Heart left ventricle (tissue), 16 donors: ENCODE measurements at regions of chr2 and their contacts with region 1.

Region 1: DNA sequence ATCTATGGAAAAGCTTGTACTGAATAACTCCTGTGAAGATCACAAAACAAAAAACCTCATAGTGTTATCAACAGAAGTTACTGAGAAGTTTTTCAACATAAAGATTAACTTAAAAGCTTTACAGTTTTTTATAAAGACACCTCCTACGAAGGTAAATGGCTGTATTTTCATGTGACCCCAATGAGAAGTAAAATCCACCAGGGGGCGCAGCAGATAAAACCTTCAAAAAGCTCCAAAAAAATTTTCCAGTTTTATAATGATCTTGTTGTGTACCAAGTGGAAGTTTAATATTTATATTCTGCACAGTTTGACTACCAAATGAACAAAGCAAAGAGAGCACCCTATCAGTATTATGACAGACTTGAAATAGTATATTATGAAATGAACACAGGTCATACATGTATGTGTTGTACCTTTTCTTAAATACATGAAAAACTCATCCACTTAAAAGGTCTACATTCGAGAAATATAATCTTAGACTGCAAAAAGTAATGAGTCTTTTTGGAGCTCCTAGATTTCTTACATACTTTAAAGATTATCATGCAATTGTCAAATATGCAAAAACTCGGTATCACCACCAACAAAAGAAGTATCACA is 38.5 kb downstream of the PNO1 start:
- DNase-seq: no peak
- ATAC-seq: peak in 1 of 4 donors; percentile 47
- H3K4me3 ChIP-seq: no peak overlapping the region
- H3K27ac ChIP-seq: no peak overlapping the region
- H3K4me1 ChIP-seq: peaks cover 0 to 57% (median 19%) of the 10 kb centered on the region in 12 donors
- H3K27me3 ChIP-seq: no peaks in the 10 kb centered on the region
- CTCF ChIP-seq: peak in 11 of 12 donors; percentile 42 to 87 (median 77)
- POLR2A ChIP-seq: no peak

Region 2: DNA sequence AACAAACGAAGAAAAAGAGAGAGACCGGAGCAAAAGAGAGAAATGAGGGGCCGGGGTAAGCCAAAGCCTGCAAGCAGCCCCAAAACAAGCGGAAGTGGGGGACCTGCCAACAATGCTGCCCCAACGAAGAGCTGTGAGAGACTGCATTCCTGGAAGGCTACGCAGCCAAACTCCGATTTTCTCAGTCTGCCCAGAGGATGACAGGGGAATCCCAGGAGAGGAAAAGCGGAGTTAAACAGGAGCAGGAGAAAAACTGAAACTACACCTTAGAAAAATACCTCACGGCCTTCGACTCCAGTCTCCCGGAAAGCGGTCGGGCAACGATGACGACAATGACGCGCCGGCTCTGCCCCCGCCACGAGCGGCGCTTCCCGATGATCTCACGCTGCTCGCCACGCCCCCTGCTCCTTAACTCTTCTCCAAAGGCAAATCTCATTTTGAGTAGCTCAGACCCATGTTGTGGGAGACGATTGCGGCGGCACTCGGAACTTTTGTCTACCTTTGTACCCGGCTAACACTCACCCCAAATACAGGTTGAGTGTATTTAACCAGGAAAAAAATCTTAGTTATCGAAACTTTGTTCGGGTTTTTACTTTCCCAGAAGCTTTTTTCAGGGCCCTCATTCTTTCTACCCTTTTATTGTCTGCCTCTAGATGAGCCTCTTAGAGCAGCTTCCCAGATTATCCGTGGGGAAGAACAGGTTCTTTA is 133.4 kb before region 1 on chr2 and contains the start of gene C1D:
- intact Hi-C with region 1: no loop called
- DNase-seq: peak; percentile 95 to 96 (median 95)
- ATAC-seq: peak; percentile 96 to 99 (median 99)
- H3K4me3 ChIP-seq: peak within 1 kb of the TSS; percentile 57 to 86 (median 76)
- H3K27ac ChIP-seq: peak within 1 kb of the TSS; percentile 27 to 90 (median 81)
- H3K4me1 ChIP-seq: peaks cover 0 to 51% (median 33%) of the 10 kb centered on the region in 12 donors
- H3K27me3 ChIP-seq: no peaks in the 10 kb centered on the region
- CTCF ChIP-seq: no peak
- POLR2A ChIP-seq: peak in 1 of 2 donors; percentile 67
- total RNA-seq, gene C1D: 12.5 to 36.6 (median 16.9) TPM

Region 3: GRCh38 chr2:68244456-68244855 is 48.2 kb after region 1 on chr2:
- intact Hi-C with region 1: loop called in 2 of 10 experiments (anchors 5 kb)
- DNase-seq: no peak
- ATAC-seq: no peak
- H3K4me3 ChIP-seq: no peak overlapping the region
- H3K27ac ChIP-seq: peak overlapping the region in 1 of 12 donors; percentile 14
- H3K4me1 ChIP-seq: peaks cover 0 to 100% (median 70%) of the 10 kb centered on the region in 12 donors
- H3K27me3 ChIP-seq: no peaks in the 10 kb centered on the region
- CTCF ChIP-seq: peak in 7 of 12 donors; percentile 15 to 44 (median 33)
- POLR2A ChIP-seq: no peak

Region 4: DNA sequence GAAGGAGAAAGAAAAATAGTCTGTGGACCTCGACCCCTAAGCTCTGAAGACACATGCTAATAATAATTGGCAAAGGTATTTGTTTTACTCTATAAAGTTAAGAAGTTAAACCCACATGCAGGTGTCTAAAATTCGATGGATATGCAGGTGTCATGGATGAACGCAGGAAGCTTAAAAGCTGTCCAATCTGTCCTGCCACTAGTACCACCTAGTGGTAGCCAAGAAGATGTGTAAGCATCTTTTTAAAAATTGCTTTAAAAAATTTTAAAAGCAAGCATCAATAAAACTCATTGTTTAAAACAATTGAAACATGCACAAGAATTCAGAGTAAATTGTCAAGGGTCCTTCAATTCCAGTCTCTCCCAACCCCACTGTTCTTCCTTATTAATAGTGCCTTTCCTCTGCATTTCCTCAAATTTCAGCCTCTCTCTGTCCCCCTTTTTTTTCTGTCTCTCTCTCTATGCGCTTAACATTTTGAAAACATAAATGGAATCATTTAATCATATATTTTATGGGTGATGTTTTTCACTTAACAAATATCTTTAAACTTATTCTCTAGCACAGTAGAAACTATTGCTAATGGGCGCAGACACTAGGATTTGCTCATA is 86.7 kb after region 1 on chr2:
- intact Hi-C with region 1: loop called in 7 of 10 experiments (anchors 2 to 10 kb)
- DNase-seq: no peak
- ATAC-seq: no peak
- H3K4me3 ChIP-seq: no peak overlapping the region
- H3K27ac ChIP-seq: no peak overlapping the region
- H3K4me1 ChIP-seq: peaks cover 0 to 34% (median 7%) of the 10 kb centered on the region in 12 donors
- H3K27me3 ChIP-seq: no peaks in the 10 kb centered on the region
- CTCF ChIP-seq: peak; percentile 58 to 80 (median 74)
- POLR2A ChIP-seq: no peak

Region 5: DNA sequence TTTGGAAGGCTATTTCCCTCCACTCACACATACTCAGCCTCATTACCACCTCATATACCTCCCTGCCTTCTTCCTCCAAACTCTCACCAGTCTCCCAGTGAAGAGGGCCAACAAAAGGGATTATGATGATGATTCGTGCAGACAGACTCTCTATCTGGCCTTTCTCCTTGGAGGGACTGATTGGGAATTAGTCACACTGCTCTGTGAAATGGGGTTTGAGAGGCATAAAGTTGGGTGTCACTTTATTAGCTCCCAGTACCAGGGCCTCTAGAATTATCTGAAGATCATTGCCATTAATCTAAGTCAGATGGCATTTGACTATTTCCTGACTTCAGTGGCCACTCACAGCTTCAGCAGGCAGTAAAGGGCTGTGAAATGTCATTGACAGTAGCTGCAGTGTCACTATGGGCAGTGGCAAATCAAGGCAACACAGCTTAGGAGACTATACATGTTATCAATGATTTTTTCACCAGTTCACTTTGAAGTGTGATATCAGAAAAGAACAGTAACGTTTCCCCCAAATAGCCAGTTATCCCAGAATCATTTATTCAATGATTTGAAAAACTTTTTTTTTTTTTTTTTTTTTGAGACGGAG is 106.2 kb after region 1 on chr2:
- intact Hi-C with region 1: no loop called
- DNase-seq: no peak
- ATAC-seq: no peak
- H3K4me3 ChIP-seq: no peak overlapping the region
- H3K27ac ChIP-seq: no peak overlapping the region
- H3K4me1 ChIP-seq: no peaks in the 10 kb centered on the region
- H3K27me3 ChIP-seq: no peaks in the 10 kb centered on the region
- CTCF ChIP-seq: no peak
- POLR2A ChIP-seq: no peak

Region 6: DNA sequence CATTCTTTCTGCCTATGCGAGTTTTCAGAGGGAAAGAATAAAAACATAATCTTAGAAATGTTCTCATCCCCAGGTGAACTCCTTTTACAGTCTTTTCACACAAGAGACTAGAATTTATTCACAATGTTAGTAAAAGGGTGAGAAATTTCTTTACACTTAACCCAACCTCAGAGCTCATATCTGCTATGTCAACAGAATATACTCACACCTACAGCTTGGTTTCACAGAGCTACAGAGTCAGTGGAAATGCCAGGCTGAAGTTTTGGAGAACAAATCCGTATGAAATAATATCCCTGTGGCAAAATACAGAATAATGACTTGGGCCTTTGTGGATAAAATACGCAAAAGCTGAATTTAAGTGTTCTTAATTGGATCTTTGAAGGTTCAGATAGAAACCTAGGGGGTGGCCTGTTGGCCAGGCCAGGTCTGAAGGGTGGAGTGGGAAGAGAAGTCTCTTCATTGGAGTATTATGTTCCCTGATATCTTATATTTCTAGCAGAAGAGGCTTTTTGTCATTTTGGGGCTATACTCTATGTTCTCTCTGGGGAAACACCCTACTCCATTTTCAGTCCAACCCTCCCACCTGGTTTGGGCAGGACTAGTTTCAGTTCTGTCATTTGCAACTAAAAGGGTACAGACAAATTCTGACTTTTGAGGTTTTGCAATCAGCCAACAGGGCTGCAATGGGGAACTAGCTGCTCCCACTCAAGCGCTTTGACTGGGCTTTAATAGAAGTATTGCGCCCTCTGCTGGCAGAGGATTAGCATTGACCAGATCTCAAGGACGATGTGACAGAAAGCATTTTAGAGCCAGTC is 245.2 kb after region 1 on chr2:
- intact Hi-C with region 1: loop called in 4 of 10 experiments (anchors 2 to 5 kb)
- DNase-seq: peak in 4 of 5 donors; percentile 81 to 86 (median 82)
- ATAC-seq: peak; percentile 82 to 93 (median 91)
- H3K4me3 ChIP-seq: no peak overlapping the region
- H3K27ac ChIP-seq: peak overlapping the region in 8 of 12 donors; percentile 10 to 69 (median 40)
- H3K4me1 ChIP-seq: peaks cover 0 to 20% (median 13%) of the 10 kb centered on the region in 12 donors
- H3K27me3 ChIP-seq: no peaks in the 10 kb centered on the region
- CTCF ChIP-seq: peak; percentile 85 to 94 (median 89)
- POLR2A ChIP-seq: no peak